ENCODE measurements at regions of chr19 and their contacts with region 1.

Region 1: DNA sequence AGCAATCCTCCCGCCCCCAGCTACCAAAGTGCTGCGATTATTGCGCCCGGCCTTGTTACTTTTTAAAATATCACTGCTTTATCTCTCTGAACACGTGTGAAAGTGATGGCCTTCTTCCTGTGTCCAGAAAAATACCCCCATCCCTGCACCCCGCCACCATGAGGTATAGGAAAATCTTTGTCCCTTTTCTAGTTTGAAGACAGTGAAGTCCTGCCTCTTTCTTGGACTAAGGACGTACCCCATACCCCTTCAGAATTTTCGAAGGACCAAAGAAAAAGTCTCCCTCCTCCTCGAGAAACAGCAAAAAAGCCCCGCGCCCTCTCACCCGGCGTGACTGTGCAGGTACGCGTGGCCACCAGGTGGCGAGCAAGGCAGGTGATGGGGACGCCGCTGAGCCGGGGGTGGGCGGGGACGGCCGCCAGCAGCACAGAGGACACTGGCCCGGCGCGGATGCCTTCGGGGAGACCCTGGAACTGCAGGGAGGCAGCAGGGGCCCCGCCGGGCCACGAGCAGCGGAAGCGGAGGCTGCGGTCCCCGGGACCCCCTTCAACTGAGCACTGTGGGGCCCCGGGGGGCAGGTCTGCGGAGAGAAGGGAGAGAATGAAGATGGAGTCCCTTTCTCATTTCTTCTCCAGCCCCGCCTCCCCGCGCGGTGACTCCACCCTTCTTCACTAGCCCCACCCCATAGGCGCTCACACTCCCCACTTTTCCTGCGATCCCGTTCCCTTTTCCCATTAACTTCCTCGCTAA is 3.2 kb downstream of the VSIG10L start:
- DNase-seq: peak; percentile 83
- ATAC-seq: peak; percentile 64
- H3K4me3 Mint-ChIP-seq: peak overlapping the region; percentile 91
- H3K27ac Mint-ChIP-seq: peak overlapping the region; percentile 75
- H3K4me1 Mint-ChIP-seq: peaks cover 36% of the 10 kb centered on the region
- H3K27me3 Mint-ChIP-seq: no peaks in the 10 kb centered on the region
- CTCF ChIP-seq: peak; percentile 41

Region 2: GRCh38 chr19:51367565-51368365 is 29.0 kb after region 1 on chr19:
- CTCF ChIA-PET with region 1: interaction called, 7 read pairs
- POLR2A ChIA-PET with region 1: interaction called, 22 read pairs
- intact Hi-C with region 1: loop called (anchors 1 kb)
- DNase-seq: peak; percentile 99
- ATAC-seq: peak; percentile 84
- H3K4me3 Mint-ChIP-seq: peak overlapping the region; percentile 98
- H3K27ac Mint-ChIP-seq: peak overlapping the region; percentile 96
- H3K4me1 Mint-ChIP-seq: peaks cover 36% of the 10 kb centered on the region
- H3K27me3 Mint-ChIP-seq: no peaks in the 10 kb centered on the region
- CTCF ChIP-seq: no peak

Region 3: GRCh38 chr19:51407511-51408131 is 68.9 kb after region 1 on chr19:
- CTCF ChIA-PET with region 1: interaction called, 15 read pairs
- POLR2A ChIA-PET with region 1: interaction called, 3 read pairs
- intact Hi-C with region 1: loop called (anchors 2 kb)
- DNase-seq: no peak
- ATAC-seq: peak; percentile 79
- H3K4me3 Mint-ChIP-seq: no peak overlapping the region
- H3K27ac Mint-ChIP-seq: peak overlapping the region; percentile 53
- H3K4me1 Mint-ChIP-seq: peaks cover 28% of the 10 kb centered on the region
- H3K27me3 Mint-ChIP-seq: no peaks in the 10 kb centered on the region
- CTCF ChIP-seq: no peak

Region 4: GRCh38 chr19:51441410-51442390 is 103.0 kb after region 1 on chr19:
- CTCF ChIA-PET with region 1: interaction called, 8 read pairs
- POLR2A ChIA-PET with region 1: interaction called, 7 read pairs
- intact Hi-C with region 1: loop called (anchors 1 kb)
- DNase-seq: peak; percentile 48
- ATAC-seq: peak; percentile 89
- H3K4me3 Mint-ChIP-seq: peak overlapping the region; percentile 71
- H3K27ac Mint-ChIP-seq: peak overlapping the region; percentile 77
- H3K4me1 Mint-ChIP-seq: peaks cover 30% of the 10 kb centered on the region
- H3K27me3 Mint-ChIP-seq: peaks cover 16% of the 10 kb centered on the region
- CTCF ChIP-seq: no peak

Region 5: DNA sequence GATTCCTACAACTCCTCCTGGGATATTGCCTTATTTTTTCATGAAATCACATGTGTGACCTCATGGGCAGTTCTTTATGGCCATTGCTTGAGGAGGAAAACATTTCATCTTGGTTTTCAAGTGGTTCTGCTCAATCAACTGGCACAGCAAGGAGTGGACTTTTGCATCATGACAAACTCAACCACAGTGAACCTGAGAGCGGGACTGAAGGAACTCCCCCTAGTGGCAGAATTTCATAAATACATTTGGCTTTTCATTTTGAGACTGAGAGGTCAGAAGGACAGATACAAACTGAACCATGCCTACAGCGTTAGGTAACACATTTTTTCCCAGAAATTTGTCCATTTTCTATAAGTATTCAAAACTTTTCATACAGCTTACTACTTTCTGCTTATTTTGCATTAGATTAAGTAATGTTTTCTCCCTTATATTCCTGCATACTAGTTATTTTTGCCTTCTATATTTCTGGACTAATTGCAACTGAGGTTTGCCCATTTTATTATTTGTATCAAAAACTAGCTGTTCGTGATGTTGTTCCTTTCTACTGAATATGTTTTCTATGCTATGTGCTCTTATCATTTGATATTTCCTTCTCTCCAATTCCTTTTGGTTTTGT is 176.2 kb after region 1 on chr19:
- CTCF ChIA-PET with region 1: interaction called, 3 read pairs
- POLR2A ChIA-PET with region 1: no interaction called
- intact Hi-C with region 1: loop called (anchors 2 kb)
- DNase-seq: no peak
- ATAC-seq: no peak
- H3K4me3 Mint-ChIP-seq: no peak overlapping the region
- H3K27ac Mint-ChIP-seq: no peak overlapping the region
- H3K4me1 Mint-ChIP-seq: peaks cover 7% of the 10 kb centered on the region
- H3K27me3 Mint-ChIP-seq: peaks cover 2% of the 10 kb centered on the region
- CTCF ChIP-seq: peak; percentile 72

Region 6: GRCh38 chr19:51660975-51661600 is 322.4 kb after region 1 on chr19:
- CTCF ChIA-PET with region 1: interaction called, 17 read pairs
- POLR2A ChIA-PET with region 1: interaction called, 10 read pairs
- intact Hi-C with region 1: loop called (anchors 1 kb)
- DNase-seq: peak; percentile 46
- ATAC-seq: peak; percentile 34
- H3K4me3 Mint-ChIP-seq: no peak overlapping the region
- H3K27ac Mint-ChIP-seq: no peak overlapping the region
- H3K4me1 Mint-ChIP-seq: peaks cover 12% of the 10 kb centered on the region
- H3K27me3 Mint-ChIP-seq: peaks cover 18% of the 10 kb centered on the region
- CTCF ChIP-seq: no peak

Region 7: GRCh38 chr19:51777570-51778462 is 439.1 kb after region 1 on chr19:
- CTCF ChIA-PET with region 1: no interaction called
- POLR2A ChIA-PET with region 1: no interaction called
- intact Hi-C with region 1: loop called (anchors 2 kb)
- DNase-seq: no peak
- ATAC-seq: peak; percentile 61
- H3K4me3 Mint-ChIP-seq: no peak overlapping the region
- H3K27ac Mint-ChIP-seq: no peak overlapping the region
- H3K4me1 Mint-ChIP-seq: peaks cover 4% of the 10 kb centered on the region
- H3K27me3 Mint-ChIP-seq: peaks cover 56% of the 10 kb centered on the region
- CTCF ChIP-seq: no peak